CD8-positive, alpha-beta T cell (primary cell): ENCODE measurements at regions of chr1 and their contacts with region 1.

Region 1: GRCh38 chr1:92960395-92961130 is 699 bp downstream of the DIPK1A start:
- DNase-seq: peak; percentile 40 to 90 (median 62)
- ATAC-seq: peak; percentile 41
- H3K4me3 ChIP-seq: peak overlapping the region; percentile 81 to 82
- H3K4me3 Mint-ChIP-seq: peak overlapping the region; percentile 92
- H3K27ac ChIP-seq: peak overlapping the region; percentile 85 to 87
- H3K27ac Mint-ChIP-seq: peak overlapping the region; percentile 96
- H3K4me1 ChIP-seq: peaks cover 57% of the 10 kb centered on the region
- H3K4me1 Mint-ChIP-seq: peaks cover 40% of the 10 kb centered on the region
- H3K27me3 ChIP-seq: no peaks in the 10 kb centered on the region
- H3K27me3 Mint-ChIP-seq: no peaks in the 10 kb centered on the region
- CTCF ChIP-seq: peak; percentile 58

Region 2: DNA sequence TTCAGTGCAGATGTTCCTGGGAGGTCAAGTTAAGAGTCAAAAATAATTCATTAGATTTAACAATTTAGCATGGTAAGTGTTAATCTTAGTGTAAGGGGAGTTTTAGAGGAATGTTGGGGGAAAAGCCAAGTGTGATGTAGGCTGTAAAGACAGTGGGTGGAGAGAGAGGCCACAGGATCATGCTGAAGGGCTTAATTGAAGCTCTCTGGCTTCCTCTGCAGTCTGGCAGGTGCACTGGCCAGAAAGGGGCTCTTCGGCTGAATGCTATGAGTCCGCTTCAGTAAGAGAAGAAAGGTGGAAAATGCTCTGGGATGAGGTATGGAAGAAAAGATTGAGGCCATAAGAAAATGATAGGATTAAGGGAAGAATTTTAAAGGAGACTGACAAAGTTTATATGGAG is 1008.4 kb before region 1 on chr1:
- CTCF ChIA-PET with region 1: no interaction called
- POLR2A ChIA-PET with region 1: no interaction called
- intact Hi-C with region 1: no loop called
- DNase-seq: no peak
- ATAC-seq: no peak
- H3K4me3 ChIP-seq: no peak overlapping the region
- H3K4me3 Mint-ChIP-seq: no peak overlapping the region
- H3K27ac ChIP-seq: no peak overlapping the region
- H3K27ac Mint-ChIP-seq: no peak overlapping the region
- H3K4me1 ChIP-seq: peaks cover 13% of the 10 kb centered on the region
- H3K4me1 Mint-ChIP-seq: peaks cover 17% of the 10 kb centered on the region
- H3K27me3 ChIP-seq: no peaks in the 10 kb centered on the region
- H3K27me3 Mint-ChIP-seq: no peaks in the 10 kb centered on the region
- CTCF ChIP-seq: no peak

Region 3: GRCh38 chr1:92882819-92883218 is 77.7 kb before region 1 on chr1:
- CTCF ChIA-PET with region 1: interaction called, 10 read pairs
- POLR2A ChIA-PET with region 1: interaction called, 8 read pairs
- intact Hi-C with region 1: loop called in 1 of 2 experiments (anchors 5 kb)
- DNase-seq: peak in 8 of 9 experiments; percentile 30 to 81 (median 56)
- ATAC-seq: peak; percentile 94
- H3K4me3 ChIP-seq: no peak overlapping the region
- H3K4me3 Mint-ChIP-seq: peak overlapping the region; percentile 42
- H3K27ac ChIP-seq: peak overlapping the region; percentile 3 to 80
- H3K27ac Mint-ChIP-seq: peak overlapping the region; percentile 96
- H3K4me1 ChIP-seq: peaks cover 19% of the 10 kb centered on the region
- H3K4me1 Mint-ChIP-seq: peaks cover 43% of the 10 kb centered on the region
- H3K27me3 ChIP-seq: no peaks in the 10 kb centered on the region
- H3K27me3 Mint-ChIP-seq: no peaks in the 10 kb centered on the region
- CTCF ChIP-seq: no peak

Region 4: DNA sequence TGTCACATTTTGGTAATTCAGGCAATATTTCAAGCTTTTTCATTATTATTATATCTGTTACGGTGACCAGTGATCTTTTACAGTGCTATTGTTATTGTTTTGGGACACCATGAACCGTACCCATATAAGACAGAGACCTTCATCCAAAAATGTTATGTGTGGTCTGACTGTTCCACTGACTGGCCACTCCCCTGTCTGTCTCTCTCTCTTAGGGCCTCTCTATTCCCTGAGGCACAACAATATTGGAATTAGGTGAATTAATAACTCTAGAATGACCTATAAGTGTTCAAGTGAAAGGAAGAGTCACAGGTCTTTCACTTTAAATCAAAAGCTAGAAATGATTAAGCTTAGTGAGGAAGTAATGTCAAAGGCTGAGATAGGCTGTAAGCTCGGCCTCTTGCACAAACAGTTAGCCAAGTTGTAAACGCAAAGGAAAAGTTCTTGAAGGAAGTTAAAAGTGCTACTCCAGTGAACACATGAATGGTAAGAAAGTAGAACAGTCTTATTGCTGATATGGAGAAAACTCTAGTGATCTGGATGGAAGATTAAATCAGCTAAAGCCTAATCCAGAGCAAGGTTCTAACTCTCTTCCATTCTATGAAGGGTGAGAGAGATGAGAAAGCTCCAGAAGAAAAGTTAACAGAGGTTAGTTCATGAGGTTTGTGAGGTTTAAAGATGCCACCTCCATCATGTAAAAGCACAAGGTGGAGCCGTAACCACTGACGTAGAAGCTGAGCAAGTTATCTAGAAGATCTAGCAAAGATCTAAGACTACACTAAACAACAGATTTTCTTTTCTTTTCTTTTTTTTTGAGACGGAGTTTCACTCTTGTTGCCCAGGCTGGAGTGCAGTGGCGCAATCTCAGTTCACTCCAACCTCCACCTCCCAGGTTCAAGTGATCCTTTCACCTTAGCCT is 20.4 kb after region 1 on chr1:
- CTCF ChIA-PET with region 1: interaction called, 20 read pairs
- POLR2A ChIA-PET with region 1: interaction called, 72 read pairs
- intact Hi-C with region 1: loop called (anchors 1 kb)
- DNase-seq: peak; percentile 20 to 93 (median 48)
- ATAC-seq: peak; percentile 93
- H3K4me3 ChIP-seq: peak overlapping the region in 1 of 2 experiments; percentile 12
- H3K4me3 Mint-ChIP-seq: peak overlapping the region; percentile 66
- H3K27ac ChIP-seq: peak overlapping the region; percentile 72 to 93
- H3K27ac Mint-ChIP-seq: peak overlapping the region; percentile 96
- H3K4me1 ChIP-seq: peaks cover 23% of the 10 kb centered on the region
- H3K4me1 Mint-ChIP-seq: peaks cover 25% of the 10 kb centered on the region
- H3K27me3 ChIP-seq: no peaks in the 10 kb centered on the region
- H3K27me3 Mint-ChIP-seq: no peaks in the 10 kb centered on the region
- CTCF ChIP-seq: no peak

Region 5: DNA sequence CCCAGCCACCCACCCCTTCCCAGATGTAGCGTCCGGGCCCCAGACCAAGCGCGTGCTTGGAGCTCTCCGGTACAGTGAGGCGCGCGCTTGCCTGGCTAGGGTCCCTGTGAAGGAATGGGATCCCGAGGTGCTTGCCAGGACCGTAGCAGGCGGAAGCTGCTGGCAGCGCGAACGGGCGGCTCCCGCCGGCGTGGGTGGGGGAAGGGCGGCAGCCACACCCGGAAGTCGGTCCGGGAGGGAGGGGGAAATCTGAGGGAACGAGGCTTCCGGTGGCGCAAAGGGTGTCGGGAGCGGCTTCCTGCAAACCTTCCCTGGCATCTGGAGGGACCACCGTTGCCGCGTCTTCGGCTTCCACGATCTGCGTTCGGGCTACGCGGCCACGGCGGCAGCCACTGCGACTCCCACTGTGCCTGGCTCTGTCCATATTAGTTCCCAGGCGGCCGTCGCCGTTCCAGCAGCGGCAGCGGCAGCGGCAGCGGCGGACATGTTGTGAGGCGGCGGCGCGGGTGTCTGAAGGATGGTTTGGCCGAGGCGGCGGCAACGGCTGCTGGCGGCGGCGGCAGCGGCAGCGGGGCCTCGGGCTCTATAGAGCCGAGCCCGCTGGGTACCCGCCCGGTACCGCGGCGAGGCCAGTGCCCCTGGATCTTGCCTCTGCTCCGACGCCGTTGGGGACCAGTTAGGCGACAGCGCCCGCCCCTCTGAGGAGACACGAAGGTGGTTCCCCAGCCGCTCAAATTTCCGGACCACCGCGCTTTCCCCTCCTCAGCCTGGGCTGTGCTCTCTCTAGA is 385.3 kb after region 1 on chr1 and contains the start of gene DR1:
- CTCF ChIA-PET with region 1: no interaction called
- POLR2A ChIA-PET with region 1: interaction called, 4 read pairs
- intact Hi-C with region 1: loop called in 1 of 2 experiments (anchors 5 kb)
- DNase-seq: peak; percentile 81 to 94 (median 90)
- ATAC-seq: peak; percentile 74
- H3K4me3 ChIP-seq: peak within 1 kb of the TSS; percentile 80 to 81
- H3K4me3 Mint-ChIP-seq: peak within 1 kb of the TSS; percentile 95
- H3K27ac ChIP-seq: peak within 1 kb of the TSS; percentile 72 to 91
- H3K27ac Mint-ChIP-seq: peak within 1 kb of the TSS; percentile 98
- H3K4me1 ChIP-seq: peaks cover 32% of the 10 kb centered on the region
- H3K4me1 Mint-ChIP-seq: peaks cover 51% of the 10 kb centered on the region
- H3K27me3 ChIP-seq: no peaks in the 10 kb centered on the region
- H3K27me3 Mint-ChIP-seq: no peaks in the 10 kb centered on the region
- CTCF ChIP-seq: no peak
- total RNA-seq, gene DR1: 49.1 to 49.9 TPM